Cardiac septum (tissue), 1 donor: ENCODE measurements at regions of chr5 and their contacts with region 1.

Region 1: DNA sequence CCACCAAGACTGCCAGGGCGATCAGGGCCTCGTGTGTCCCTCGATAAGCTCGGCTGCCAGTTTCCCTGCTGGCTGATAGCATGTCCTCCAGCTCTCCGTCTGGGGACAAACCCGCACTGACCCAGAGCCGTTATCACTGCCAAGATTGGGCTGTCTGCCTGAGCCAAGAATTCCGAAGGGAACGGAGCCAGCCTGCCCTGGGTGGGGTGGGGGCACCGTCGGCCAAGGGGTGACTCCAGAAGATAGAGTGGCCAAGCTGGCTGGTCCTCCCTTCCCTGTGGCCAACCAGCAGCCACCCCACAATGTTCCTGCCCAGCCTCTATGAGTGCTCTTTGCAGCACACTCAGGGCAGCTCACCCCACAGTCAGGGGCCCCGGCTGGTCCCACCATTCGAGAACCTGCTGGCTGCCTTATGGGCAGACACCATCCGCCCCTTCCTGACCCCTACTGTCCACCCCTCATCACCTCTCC is 29.4 kb downstream of the HRH2 start:
- DNase-seq: peak; percentile 92

Region 2: GRCh38 chr5:175597718-175598117 is 89.5 kb before region 1 on chr5:
- intact Hi-C with region 1: no loop called
- DNase-seq: no peak

Region 3: GRCh38 chr5:175657593-175658271 is 29.5 kb before region 1 on chr5 and contains the start of gene HRH2:
- intact Hi-C with region 1: loop called (anchors 2 kb)
- DNase-seq: peak; percentile 89
- total RNA-seq, gene HRH2: 60.1 TPM